ENCODE measurements at regions of chr2 and their contacts with region 1.

Region 1: GRCh38 chr2:65511306-65511705 is 78.9 kb upstream of the SPRED2 start:
- DNase-seq: no peak
- H3K4me3 ChIP-seq: no peak overlapping the region
- H3K27ac ChIP-seq: no peak overlapping the region
- H3K4me1 ChIP-seq: peaks cover 11% of the 10 kb centered on the region
- H3K27me3 ChIP-seq: no peaks in the 10 kb centered on the region
- CTCF ChIP-seq: no peak

Region 2: DNA sequence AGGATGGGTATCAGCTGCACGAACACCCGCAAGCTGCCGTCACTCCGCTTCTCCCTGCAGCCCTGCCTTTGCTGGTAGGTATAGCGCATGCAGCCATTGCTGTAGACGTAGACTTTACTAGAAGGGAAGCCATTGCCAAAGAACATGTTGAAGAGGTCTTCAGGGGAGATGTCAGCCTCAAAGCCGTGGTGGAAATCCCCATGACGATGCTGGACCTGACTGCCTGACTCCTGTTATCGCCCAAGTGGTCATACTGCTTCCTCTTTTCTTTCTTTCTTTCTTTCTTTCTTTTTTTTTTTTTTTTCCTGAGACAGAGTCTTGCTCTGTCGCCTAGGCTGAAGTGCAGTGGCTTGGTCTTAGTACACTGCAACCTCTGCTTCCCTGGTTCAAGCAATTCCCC is 10.2 kb before region 1 on chr2:
- CTCF ChIA-PET with region 1: no interaction called
- POLR2A ChIA-PET with region 1: interaction called, 18 read pairs
- intact Hi-C with region 1: no loop called
- DNase-seq: no peak
- H3K4me3 ChIP-seq: no peak overlapping the region
- H3K27ac ChIP-seq: no peak overlapping the region
- H3K4me1 ChIP-seq: peaks cover 18% of the 10 kb centered on the region
- H3K27me3 ChIP-seq: no peaks in the 10 kb centered on the region
- CTCF ChIP-seq: no peak

Region 3: GRCh38 chr2:65630643-65631042 is 119.3 kb after region 1 on chr2:
- CTCF ChIA-PET with region 1: no interaction called
- POLR2A ChIA-PET with region 1: no interaction called
- intact Hi-C with region 1: no loop called
- DNase-seq: no peak
- H3K4me3 ChIP-seq: no peak overlapping the region
- H3K27ac ChIP-seq: no peak overlapping the region
- H3K4me1 ChIP-seq: no peaks in the 10 kb centered on the region
- H3K27me3 ChIP-seq: no peaks in the 10 kb centered on the region
- CTCF ChIP-seq: no peak

Region 4: DNA sequence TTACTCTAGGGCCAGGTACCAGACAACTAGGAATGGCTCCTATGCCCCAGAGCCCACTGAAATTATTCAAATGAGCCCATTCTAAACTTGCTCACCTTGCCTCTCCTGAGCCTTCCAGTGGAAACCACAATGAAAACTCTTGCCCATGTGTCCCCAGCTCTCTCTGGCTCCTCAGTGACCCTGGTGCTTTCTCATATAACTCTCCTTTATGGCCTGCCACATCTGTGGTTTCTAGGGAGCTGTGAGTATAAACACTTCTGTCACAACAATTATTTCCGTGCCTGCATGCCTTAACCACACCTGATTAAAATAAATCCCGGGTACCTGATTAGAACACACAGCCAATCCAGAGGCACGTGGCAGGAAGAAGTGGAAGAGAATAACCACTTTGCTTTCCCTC is 254.1 kb after region 1 on chr2:
- CTCF ChIA-PET with region 1: no interaction called
- POLR2A ChIA-PET with region 1: no interaction called
- intact Hi-C with region 1: no loop called
- DNase-seq: no peak
- H3K4me3 ChIP-seq: no peak overlapping the region
- H3K27ac ChIP-seq: no peak overlapping the region
- H3K4me1 ChIP-seq: no peaks in the 10 kb centered on the region
- H3K27me3 ChIP-seq: 0 out of 2 replicates have a peak, but pooled peaks cover 6% of the 10 kb centered on the region
- CTCF ChIP-seq: no peak